Esophagus muscularis mucosa (tissue), 4 donors: ENCODE measurements at regions of chr2 and their contacts with region 1.

Region 1: GRCh38 chr2:105517814-105518705 is 119.2 kb upstream of the FHL2 start:
- DNase-seq: peak; percentile 86
- H3K4me3 ChIP-seq: no peak overlapping the region
- H3K27ac ChIP-seq: no peak overlapping the region
- H3K4me1 ChIP-seq: peaks cover 23 to 31% (median 29%) of the 10 kb centered on the region in 4 donors
- H3K27me3 ChIP-seq: no peaks in the 10 kb centered on the region
- CTCF ChIP-seq: no peak
- EP300 ChIP-seq: no peak
- POLR2A ChIP-seq: no peak

Region 2: DNA sequence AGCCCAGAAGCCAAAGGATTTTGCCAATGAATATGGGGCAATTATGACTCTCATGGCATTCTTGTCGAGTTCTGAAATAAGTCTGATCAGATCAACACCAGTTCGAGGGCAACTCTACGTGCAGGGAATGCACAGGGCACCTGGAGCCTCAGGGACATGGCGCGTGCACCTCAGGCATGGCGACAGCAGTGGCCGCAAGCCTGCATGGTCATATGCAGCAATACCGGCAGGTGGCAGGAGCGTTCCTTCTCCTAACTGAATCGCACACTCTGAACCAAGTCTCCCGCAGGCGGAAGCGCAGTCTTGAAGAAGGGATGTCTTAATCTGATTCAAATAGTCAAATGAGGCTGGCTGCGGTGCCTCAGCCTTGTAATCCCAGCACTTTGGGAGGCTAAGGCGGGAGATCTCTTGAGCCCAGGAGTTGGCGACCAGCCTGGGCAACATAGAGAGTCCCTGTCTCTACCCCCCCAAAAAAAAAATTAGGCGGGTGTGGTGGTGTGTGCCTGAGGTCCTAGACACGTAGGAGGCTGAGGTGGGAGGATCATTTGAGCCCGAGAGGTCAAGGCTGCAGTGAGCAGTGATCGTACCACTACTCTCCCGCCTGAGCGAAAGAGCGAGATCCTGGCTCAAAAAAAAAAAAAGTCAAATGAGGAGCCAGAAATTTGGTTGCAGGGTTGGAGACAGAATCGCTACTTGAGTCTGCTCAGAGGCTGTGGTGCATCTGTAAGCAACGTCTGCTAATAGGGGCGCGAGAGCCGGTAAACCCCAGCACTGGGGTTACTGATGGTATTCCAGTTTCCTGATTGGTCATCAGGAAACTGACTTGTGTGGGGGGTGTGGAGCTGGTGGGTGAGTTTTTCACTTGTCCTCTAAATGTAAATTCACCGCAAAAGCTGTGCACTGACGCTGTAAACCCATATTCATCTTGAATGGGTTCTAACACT is 148.0 kb before region 1 on chr2:
- intact Hi-C with region 1: loop called (anchors 2 kb)
- DNase-seq: no peak
- H3K4me3 ChIP-seq: no peak overlapping the region
- H3K27ac ChIP-seq: no peak overlapping the region
- H3K4me1 ChIP-seq: peaks cover 44 to 51% (median 50%) of the 10 kb centered on the region in 4 donors
- H3K27me3 ChIP-seq: no peaks in the 10 kb centered on the region
- CTCF ChIP-seq: peak; percentile 87 to 93 (median 91)
- EP300 ChIP-seq: no peak
- POLR2A ChIP-seq: no peak